CD4-positive, alpha-beta T cell (primary cell): ENCODE measurements at regions of chr14 and their contacts with region 1.

Region 1: GRCh38 chr14:77028384-77029231 is at the start of gene IRF2BPL:
- DNase-seq: peak; percentile 88 to 98 (median 94)
- ATAC-seq: peak; percentile 66
- H3K4me3 ChIP-seq: peak within 1 kb of the TSS; percentile 95
- H3K4me3 Mint-ChIP-seq: peak within 1 kb of the TSS; percentile 93
- H3K27ac ChIP-seq: peak within 1 kb of the TSS; percentile 95
- H3K27ac Mint-ChIP-seq: peak within 1 kb of the TSS; percentile 100
- H3K4me1 ChIP-seq: peaks cover 84% of the 10 kb centered on the region
- H3K4me1 Mint-ChIP-seq: peaks cover 64% of the 10 kb centered on the region
- H3K27me3 ChIP-seq: no peaks in the 10 kb centered on the region
- H3K27me3 Mint-ChIP-seq: no peaks in the 10 kb centered on the region
- CTCF ChIP-seq: no peak
- total RNA-seq, gene IRF2BPL: 70.9 to 71.8 TPM

Region 2: DNA sequence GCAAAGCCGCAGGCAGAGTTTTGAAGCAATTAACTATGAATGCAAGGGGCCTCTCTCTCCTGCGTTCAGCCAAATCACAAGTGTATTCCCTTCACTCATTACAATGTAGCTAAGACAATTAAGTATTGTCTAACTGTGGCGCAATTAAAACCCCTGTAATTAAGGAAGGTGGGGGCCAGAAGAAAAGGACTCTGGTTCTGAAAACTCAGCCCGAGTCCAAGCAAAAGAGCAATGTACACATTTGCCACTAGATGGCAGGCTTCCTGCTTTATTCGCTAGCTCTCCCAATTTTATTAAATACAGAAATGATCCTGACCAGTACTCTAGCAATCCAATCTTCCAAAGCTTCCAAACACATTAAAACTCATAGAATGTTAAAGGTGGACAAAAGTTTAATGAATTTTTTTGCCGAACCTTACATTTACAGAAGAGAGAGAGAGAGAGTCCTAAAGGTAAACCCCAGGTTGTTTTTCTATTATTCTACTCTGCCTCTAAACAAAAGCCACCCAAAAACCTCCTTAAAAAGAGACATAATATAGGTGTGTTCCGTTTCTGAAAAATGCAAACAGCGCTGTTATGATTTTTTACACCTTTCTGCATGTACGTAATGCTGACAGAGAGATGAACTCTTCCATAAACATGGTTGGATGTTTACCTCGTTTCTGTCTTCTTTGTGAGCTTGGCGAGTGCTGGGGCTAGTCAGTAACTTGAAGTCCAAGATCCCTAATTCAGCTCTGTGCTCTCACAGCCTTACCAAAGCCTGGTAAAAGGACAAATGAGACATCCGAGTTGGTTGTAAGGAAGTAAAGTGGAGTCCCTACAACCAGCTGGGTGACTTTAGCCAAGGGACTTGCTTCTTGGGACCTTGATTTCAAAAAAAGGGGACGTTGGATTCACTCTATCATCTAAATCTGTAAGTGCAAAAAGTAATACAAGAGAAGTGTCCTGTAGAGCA is 318.3 kb before region 1 on chr14:
- CTCF ChIA-PET with region 1: no interaction called
- POLR2A ChIA-PET with region 1: no interaction called
- intact Hi-C with region 1: no loop called
- DNase-seq: peak in 7 of 14 experiments; percentile 9 to 71 (median 42)
- ATAC-seq: peak; percentile 55
- H3K4me3 ChIP-seq: no peak overlapping the region
- H3K4me3 Mint-ChIP-seq: no peak overlapping the region
- H3K27ac ChIP-seq: no peak overlapping the region
- H3K27ac Mint-ChIP-seq: no peak overlapping the region
- H3K4me1 ChIP-seq: no peaks in the 10 kb centered on the region
- H3K4me1 Mint-ChIP-seq: no peaks in the 10 kb centered on the region
- H3K27me3 ChIP-seq: peaks cover 0 to 5% of the 10 kb centered on the region in 2 experiments
- H3K27me3 Mint-ChIP-seq: peaks cover 22% of the 10 kb centered on the region
- CTCF ChIP-seq: peak; percentile 89

Region 3: GRCh38 chr14:76918751-76919543 is 109.7 kb before region 1 on chr14:
- CTCF ChIA-PET with region 1: interaction called, 11 read pairs
- POLR2A ChIA-PET with region 1: interaction called, 13 read pairs
- intact Hi-C with region 1: loop called in 1 of 2 experiments (anchors 5 kb)
- DNase-seq: peak in 2 of 14 experiments; percentile 46 to 49
- ATAC-seq: no peak
- H3K4me3 ChIP-seq: no peak overlapping the region
- H3K4me3 Mint-ChIP-seq: no peak overlapping the region
- H3K27ac ChIP-seq: no peak overlapping the region
- H3K27ac Mint-ChIP-seq: no peak overlapping the region
- H3K4me1 ChIP-seq: peaks cover 51% of the 10 kb centered on the region
- H3K4me1 Mint-ChIP-seq: peaks cover 60% of the 10 kb centered on the region
- H3K27me3 ChIP-seq: no peaks in the 10 kb centered on the region
- H3K27me3 Mint-ChIP-seq: no peaks in the 10 kb centered on the region
- CTCF ChIP-seq: no peak

Region 4: DNA sequence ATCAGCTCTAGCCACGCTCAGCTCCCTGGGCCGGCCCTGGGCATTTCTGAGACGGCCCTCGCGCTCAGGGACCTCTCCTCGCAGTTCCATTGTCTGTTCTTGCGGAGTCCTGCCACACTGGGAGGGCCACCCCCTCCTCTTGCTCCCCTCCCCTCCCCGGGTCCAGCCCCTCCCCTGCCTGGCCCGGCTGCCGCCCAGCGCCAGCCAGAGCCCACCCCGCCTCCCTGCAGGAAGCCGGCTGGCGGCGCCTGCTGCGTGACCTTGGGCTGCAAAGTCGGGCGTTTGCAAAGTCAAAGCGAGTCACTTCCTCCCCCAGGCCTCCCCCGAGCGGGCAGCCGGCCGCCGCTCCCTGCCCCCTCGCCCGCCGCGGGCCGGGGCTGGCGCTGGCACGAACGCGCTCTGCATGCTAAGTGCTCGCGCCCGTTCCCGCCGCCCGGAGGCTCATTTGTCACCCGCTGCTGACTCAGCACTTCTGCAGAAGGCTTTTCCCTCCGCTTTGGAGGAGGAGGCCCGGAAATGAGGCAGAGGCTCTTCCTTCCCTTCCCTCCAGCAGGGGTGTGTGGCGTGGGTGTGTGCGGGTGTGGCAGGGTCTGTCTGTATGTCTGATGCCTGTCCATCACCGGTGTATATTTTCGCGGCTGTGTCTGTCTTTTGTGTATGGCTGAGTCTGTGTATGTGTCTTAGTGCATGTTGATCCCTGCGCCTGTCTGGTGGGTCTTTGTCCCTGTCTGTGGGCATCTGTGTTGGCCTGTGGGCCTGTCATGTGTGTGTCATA is 72.1 kb before region 1 on chr14:
- CTCF ChIA-PET with region 1: interaction called, 15 read pairs
- POLR2A ChIA-PET with region 1: interaction called, 81 read pairs
- intact Hi-C with region 1: loop called (anchors 1 to 2 kb)
- DNase-seq: peak; percentile 65 to 97 (median 82)
- ATAC-seq: peak; percentile 60
- H3K4me3 ChIP-seq: peak overlapping the region; percentile 52
- H3K4me3 Mint-ChIP-seq: peak overlapping the region; percentile 82
- H3K27ac ChIP-seq: peak overlapping the region; percentile 95
- H3K27ac Mint-ChIP-seq: peak overlapping the region; percentile 92
- H3K4me1 ChIP-seq: peaks cover 71% of the 10 kb centered on the region
- H3K4me1 Mint-ChIP-seq: peaks cover 69% of the 10 kb centered on the region
- H3K27me3 ChIP-seq: no peaks in the 10 kb centered on the region
- H3K27me3 Mint-ChIP-seq: no peaks in the 10 kb centered on the region
- CTCF ChIP-seq: no peak

Region 5: GRCh38 chr14:77040059-77040740 is 11.6 kb after region 1 on chr14:
- CTCF ChIA-PET with region 1: interaction called, 14 read pairs
- POLR2A ChIA-PET with region 1: interaction called, 220 read pairs
- intact Hi-C with region 1: loop called in 1 of 2 experiments (anchors 1 kb)
- DNase-seq: peak; percentile 96 to 100 (median 99)
- ATAC-seq: peak; percentile 79
- H3K4me3 ChIP-seq: peak overlapping the region; percentile 46
- H3K4me3 Mint-ChIP-seq: peak overlapping the region; percentile 84
- H3K27ac ChIP-seq: peak overlapping the region; percentile 93 to 96
- H3K27ac Mint-ChIP-seq: peak overlapping the region; percentile 100
- H3K4me1 ChIP-seq: peaks cover 86% of the 10 kb centered on the region
- H3K4me1 Mint-ChIP-seq: peaks cover 96% of the 10 kb centered on the region
- H3K27me3 ChIP-seq: no peaks in the 10 kb centered on the region
- H3K27me3 Mint-ChIP-seq: no peaks in the 10 kb centered on the region
- CTCF ChIP-seq: no peak